ENCODE measurements at regions of chr19 and their contacts with region 1.

Region 1: DNA sequence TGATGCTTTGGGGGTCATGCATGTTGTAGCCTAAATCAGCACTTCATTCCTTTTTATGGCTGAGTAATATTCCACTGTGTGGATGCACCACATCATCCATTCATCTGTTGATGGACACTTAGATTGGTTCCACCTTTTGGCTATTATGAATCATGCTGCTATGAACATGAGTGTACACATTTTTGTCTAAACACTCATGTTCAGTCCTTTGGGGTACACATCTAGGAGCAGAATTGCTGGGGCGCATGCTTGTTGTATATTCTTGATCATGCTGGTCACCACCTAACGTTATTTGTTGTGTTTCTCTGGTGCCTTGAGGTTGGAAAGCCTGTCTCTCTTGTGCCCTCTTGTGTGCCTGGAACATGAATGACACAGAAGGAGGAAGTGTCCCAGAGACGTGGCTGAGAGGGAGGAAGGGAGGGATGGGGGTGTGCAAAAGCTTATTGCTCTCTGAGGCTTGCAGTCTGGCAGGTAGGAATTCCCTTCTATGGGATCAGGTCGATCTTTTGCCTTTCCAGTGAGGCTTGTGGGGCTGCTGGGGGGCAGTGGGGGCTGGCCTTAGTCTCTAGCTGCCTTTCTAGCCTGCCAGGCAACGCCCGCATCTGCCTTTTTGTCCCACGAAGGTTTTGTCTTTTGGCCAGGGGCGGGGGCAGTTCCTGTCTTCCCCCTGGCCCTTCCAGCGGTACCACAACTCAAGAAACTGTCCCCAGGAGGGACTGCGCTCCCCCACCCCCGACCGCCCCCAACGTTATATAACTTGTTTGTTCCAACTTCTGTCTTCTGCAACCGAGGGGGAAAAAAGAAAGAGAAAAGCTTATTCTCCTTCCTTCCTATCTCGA is 7.6 kb downstream of the KLHL26 start:
- DNase-seq: peak; percentile 18
- H3K4me3 ChIP-seq: no peak overlapping the region
- H3K27ac ChIP-seq: no peak overlapping the region
- H3K4me1 ChIP-seq: peaks cover 21% of the 10 kb centered on the region
- H3K27me3 ChIP-seq: no peaks in the 10 kb centered on the region
- CTCF ChIP-seq: no peak

Region 2: GRCh38 chr19:18562086-18562485 is 82.3 kb before region 1 on chr19:
- CTCF ChIA-PET with region 1: no interaction called
- dilution Hi-C with region 1: no loop called
- in situ Hi-C with region 1: no loop called
- intact Hi-C with region 1: no loop called
- DNase-seq: no peak
- H3K4me3 ChIP-seq: no peak overlapping the region
- H3K27ac ChIP-seq: no peak overlapping the region
- H3K4me1 ChIP-seq: no peaks in the 10 kb centered on the region
- H3K27me3 ChIP-seq: no peaks in the 10 kb centered on the region
- CTCF ChIP-seq: no peak

Region 3: DNA sequence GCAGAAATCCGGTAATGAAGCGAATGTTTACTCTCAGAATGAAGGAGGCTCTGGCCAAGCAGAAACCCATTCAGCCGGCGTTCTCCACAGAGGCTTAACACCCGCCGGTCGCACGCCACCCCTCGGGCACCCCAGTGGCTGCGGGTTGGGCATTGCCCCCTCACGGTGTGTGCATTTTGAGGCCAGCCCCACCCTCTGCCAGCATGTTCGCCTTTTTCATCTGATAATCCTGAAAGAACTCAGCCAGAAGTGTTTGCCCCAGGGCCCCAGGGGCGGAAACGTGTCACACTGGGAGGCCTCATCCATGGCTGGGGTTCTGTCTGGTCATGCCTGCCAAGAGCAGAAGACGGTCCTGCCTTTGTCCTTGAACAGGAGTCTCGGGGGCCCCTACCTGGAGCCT is 112.5 kb after region 1 on chr19:
- CTCF ChIA-PET with region 1: no interaction called
- dilution Hi-C with region 1: loop called (anchors 5 kb)
- in situ Hi-C with region 1: no loop called
- intact Hi-C with region 1: loop called (anchors 5 kb)
- DNase-seq: peak; percentile 90
- H3K4me3 ChIP-seq: no peak overlapping the region
- H3K27ac ChIP-seq: peak overlapping the region; percentile 66
- H3K4me1 ChIP-seq: peaks cover 21% of the 10 kb centered on the region
- H3K27me3 ChIP-seq: no peaks in the 10 kb centered on the region
- CTCF ChIP-seq: peak in 1 of 2 donors; percentile 23

Measured in mammary epithelial cell (primary cell).